GM23248 (cell line): ENCODE measurements at regions of chr3 and their contacts with region 1.

Region 1: GRCh38 chr3:98602078-98602678 is 8.8 kb upstream of the CPOX start:
- DNase-seq: peak; percentile 78
- H3K4me3 ChIP-seq: no peak overlapping the region
- H3K27ac ChIP-seq: no peak overlapping the region
- H3K4me1 ChIP-seq: peaks cover 4% of the 10 kb centered on the region; the same call in 1 of the 2 replicates
- H3K27me3 ChIP-seq: no peaks in the 10 kb centered on the region

Region 2: DNA sequence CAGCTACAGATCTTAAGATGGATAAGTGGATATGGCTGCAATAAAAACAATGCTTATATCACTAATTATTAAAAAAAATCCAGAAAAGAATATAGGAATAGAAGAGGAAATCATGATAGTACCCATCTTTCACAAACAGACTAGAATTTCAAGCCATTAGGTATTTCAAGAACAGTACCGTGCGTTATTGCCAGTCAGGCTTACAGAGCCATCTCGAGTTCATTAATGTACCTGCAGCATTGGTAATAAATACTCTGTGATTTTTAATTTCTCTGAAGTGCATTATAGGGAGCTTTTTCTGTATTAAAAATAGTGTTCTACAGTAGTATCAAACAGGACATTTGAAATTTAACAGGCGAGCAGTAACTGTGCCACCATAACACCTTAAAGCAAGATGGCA is 196.6 kb after region 1 on chr3:
- in situ Hi-C with region 1: loop called (anchors 5 kb)
- DNase-seq: no peak
- H3K4me3 ChIP-seq: no peak overlapping the region
- H3K27ac ChIP-seq: no peak overlapping the region
- H3K4me1 ChIP-seq: 0 out of 2 replicates have a peak, but pooled peaks cover 4% of the 10 kb centered on the region
- H3K27me3 ChIP-seq: no peaks in the 10 kb centered on the region

Region 3: GRCh38 chr3:98994128-98994762 is 392.1 kb after region 1 on chr3:
- in situ Hi-C with region 1: loop called (anchors 10 kb)
- DNase-seq: peak; percentile 74
- H3K4me3 ChIP-seq: no peak overlapping the region
- H3K27ac ChIP-seq: no peak overlapping the region
- H3K4me1 ChIP-seq: no peaks in the 10 kb centered on the region
- H3K27me3 ChIP-seq: no peaks in the 10 kb centered on the region

Region 4: GRCh38 chr3:99753268-99753975 is 1151.2 kb after region 1 on chr3:
- in situ Hi-C with region 1: loop called (anchors 25 kb)
- DNase-seq: peak; percentile 86
- H3K4me3 ChIP-seq: no peak overlapping the region
- H3K27ac ChIP-seq: no peak overlapping the region
- H3K4me1 ChIP-seq: peaks cover 28% of the 10 kb centered on the region
- H3K27me3 ChIP-seq: no peaks in the 10 kb centered on the region